BJ (cell line): ENCODE measurements at regions of chr5 and their contacts with region 1.

Region 1: GRCh38 chr5:38265546-38266179 is 7.3 kb downstream of the EGFLAM start:
- DNase-seq: no peak
- H3K4me3 ChIP-seq: no peak overlapping the region
- H3K27me3 ChIP-seq: peaks cover 2% of the 10 kb centered on the region; the same call in 1 of the 2 replicates
- CTCF ChIP-seq: peak; percentile 75

Region 2: DNA sequence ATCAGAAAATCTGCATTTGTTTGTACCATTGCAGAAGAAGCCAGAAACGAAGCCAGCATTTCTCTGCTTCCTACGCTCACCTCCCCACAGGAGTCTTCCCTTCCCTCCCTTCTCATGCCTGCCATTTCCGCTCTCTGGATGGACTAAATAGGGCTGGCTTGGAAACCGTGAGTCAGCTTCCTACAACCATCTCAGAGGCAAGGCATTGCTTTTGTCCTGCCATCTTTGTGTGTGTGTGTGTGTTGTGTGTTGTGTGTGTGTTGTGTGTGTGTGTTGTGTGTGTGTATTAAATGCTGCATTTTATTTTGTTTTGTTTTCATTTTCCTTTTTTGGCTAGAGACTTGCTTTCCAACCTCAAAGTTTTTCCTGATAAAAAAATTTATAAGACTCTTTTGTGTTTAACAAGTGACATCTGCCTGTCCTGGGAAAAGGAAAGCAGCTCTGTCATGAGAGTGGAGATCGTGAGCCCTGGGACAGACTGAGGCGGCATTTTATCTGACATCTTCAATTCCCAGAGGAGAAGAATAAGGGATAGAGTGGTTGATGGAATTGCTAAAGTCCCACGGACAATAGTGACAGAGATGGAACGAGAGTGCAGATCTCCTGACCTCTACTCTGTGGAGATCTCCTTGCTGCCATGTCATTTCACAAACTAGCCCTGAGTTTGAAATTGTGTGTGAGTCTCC is 14.8 kb before region 1 on chr5:
- CTCF ChIA-PET with region 1: interaction called, 26 read pairs
- POLR2A ChIA-PET with region 1: no interaction called
- DNase-seq: no peak
- H3K4me3 ChIP-seq: no peak overlapping the region
- H3K27me3 ChIP-seq: no peaks in the 10 kb centered on the region; the same call in 1 of the 2 replicates
- CTCF ChIP-seq: no peak

Region 3: DNA sequence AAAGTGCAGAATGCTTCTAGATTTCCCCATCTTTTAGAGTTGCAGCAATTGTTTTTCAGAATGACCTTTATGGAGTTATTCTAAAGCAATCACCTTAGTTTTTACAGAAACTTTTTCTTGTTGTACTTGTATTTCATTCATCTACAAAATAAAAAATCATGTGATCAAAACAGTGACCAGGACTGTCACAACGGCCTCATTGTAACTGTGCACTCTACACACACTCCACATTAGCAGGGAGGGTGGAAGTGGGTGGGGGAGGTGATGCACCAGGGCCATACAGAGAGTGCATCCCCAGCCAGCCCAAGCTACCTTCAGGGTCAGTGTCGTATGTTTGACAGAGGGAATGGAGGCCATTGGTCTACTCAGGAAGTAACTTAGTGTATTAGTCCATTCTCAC is 19.6 kb after region 1 on chr5:
- CTCF ChIA-PET with region 1: interaction called, 18 read pairs
- POLR2A ChIA-PET with region 1: no interaction called
- DNase-seq: no peak
- H3K4me3 ChIP-seq: no peak overlapping the region
- H3K27me3 ChIP-seq: no peaks in the 10 kb centered on the region; the same call in 1 of the 2 replicates
- CTCF ChIP-seq: no peak

Region 4: GRCh38 chr5:38515646-38516045 is 250.0 kb after region 1 on chr5:
- CTCF ChIA-PET with region 1: no interaction called
- POLR2A ChIA-PET with region 1: no interaction called
- DNase-seq: no peak
- H3K4me3 ChIP-seq: no peak overlapping the region
- H3K27me3 ChIP-seq: no peaks in the 10 kb centered on the region
- CTCF ChIP-seq: peak; percentile 65